ENCODE measurements at regions of chr6 and their contacts with region 1.

Region 1: DNA sequence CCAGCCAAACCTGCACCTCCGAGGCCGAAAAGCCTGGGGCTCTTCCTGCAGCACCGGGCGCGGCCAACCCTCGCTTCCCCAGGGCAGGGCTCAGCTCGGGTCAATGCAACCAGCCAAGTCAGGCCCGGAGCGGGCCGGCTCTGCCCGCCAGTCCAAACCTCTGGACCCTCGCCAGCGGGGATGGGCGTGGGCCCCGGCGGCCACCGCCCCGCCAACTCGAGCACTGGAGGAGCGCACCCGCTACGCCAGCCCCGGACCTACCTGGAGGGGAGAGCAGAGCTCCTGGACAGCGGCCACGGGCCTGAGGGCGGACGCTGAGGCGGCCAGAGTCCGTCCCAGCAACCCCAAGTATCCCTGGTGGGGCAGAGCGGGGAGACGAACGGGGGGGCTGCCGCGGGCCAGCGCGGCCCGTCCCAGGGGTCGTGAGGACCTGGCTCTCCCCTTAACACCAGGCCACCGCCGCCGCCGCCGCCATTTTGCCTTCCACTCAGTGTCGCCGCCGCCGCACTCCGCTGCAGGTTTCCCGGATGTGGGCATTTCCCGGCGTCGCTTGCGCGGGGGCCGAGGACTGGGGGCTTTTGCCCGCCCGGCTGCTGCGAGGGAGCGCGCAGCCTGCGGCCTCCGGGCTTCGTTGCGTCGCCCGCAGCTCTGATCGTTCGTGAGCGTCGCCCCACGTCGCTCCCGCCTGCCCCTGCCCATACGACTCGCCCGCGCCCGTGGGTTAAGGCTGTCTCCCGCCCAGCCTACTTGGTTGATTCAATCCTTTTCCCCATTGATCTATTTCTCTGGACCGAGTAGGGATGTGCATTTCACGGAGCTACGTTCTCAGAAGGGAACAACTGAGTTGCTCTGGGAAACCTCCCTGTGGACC is at the start of gene LATS1:
- DNase-seq: peak; percentile 86 to 93 (median 88)
- ATAC-seq: peak; percentile 94
- H3K4me3 ChIP-seq: peak within 1 kb of the TSS; percentile 98
- H3K27ac ChIP-seq: peak within 1 kb of the TSS; percentile 98
- H3K4me1 ChIP-seq: peaks cover 5 to 17% of the 10 kb centered on the region in 2 experiments; a peak in 4 of 5 replicates
- H3K27me3 ChIP-seq: no peaks in the 10 kb centered on the region
- CTCF ChIP-seq: no peak
- EP300 ChIP-seq: no peak; the same call in 1 of the 2 replicates
- POLR2A ChIP-seq: peak; percentile 96
- RAD21 ChIP-seq: no peak
- polyA plus RNA-seq, gene LATS1: 5.0 to 5.6 TPM

Region 2: GRCh38 chr6:149545754-149546528 is 171.9 kb before region 1 on chr6 and contains the start of gene PPIL4:
- CTCF ChIA-PET with region 1: no interaction called
- POLR2A ChIA-PET with region 1: interaction called, 5 read pairs
- in situ Hi-C with region 1: no loop called
- intact Hi-C with region 1: loop called (anchors 5 kb)
- DNase-seq: peak; percentile 95 to 98 (median 96)
- ATAC-seq: peak; percentile 90
- H3K4me3 ChIP-seq: peak within 1 kb of the TSS; percentile 97
- H3K27ac ChIP-seq: peak within 1 kb of the TSS; percentile 94
- H3K4me1 ChIP-seq: peaks cover 13 to 14% of the 10 kb centered on the region in 2 experiments; a peak in 4 of 5 replicates
- H3K27me3 ChIP-seq: no peaks in the 10 kb centered on the region
- CTCF ChIP-seq: peak; percentile 71 to 99 (median 84)
- EP300 ChIP-seq: peak; percentile 19; the same call in 1 of the 2 replicates
- POLR2A ChIP-seq: peak; percentile 90
- RAD21 ChIP-seq: peak; percentile 60 to 64
- polyA plus RNA-seq, gene PPIL4: 48.5 to 55.2 TPM

Region 3: DNA sequence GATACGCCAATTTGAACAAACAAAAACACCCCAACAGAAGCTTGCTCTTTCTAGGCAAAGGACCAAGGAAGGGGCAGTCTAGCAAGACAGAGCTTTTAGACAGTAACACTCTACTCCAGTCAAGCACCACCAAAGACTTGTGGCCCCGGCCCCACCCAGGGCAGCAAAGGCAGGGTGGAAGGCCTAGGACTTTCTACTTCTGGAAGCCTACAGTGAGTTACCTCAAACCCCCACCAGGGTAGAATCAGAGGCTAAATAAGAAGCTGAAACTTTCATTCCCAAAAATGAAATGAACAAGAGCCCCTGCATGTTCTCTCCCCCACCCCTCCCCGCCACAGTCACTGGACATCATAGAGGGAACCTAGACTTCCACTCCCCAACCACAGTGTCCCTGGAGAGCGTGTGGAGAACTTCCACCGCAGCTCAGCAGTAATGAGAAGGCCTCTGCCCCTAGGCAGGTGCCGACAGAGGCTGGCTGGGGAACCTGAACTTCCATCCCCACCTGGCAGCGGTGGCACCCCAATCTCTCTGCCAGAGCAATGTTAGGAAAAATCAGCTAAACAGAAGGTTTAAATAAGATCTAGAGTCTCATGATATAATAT is 109.3 kb before region 1 on chr6:
- CTCF ChIA-PET with region 1: no interaction called
- POLR2A ChIA-PET with region 1: no interaction called
- in situ Hi-C with region 1: no loop called
- intact Hi-C with region 1: no loop called
- DNase-seq: peak in 1 of 4 experiments; percentile 35
- ATAC-seq: peak; percentile 79
- H3K4me3 ChIP-seq: no peak overlapping the region
- H3K27ac ChIP-seq: no peak overlapping the region
- H3K4me1 ChIP-seq: no peaks in the 10 kb centered on the region
- H3K27me3 ChIP-seq: no peaks in the 10 kb centered on the region
- CTCF ChIP-seq: no peak
- EP300 ChIP-seq: no peak
- POLR2A ChIP-seq: no peak
- RAD21 ChIP-seq: no peak

Region 4: GRCh38 chr6:149648148-149649145 is 69.4 kb before region 1 on chr6 and contains the start of gene KATNA1:
- CTCF ChIA-PET with region 1: no interaction called
- POLR2A ChIA-PET with region 1: interaction called, 4 read pairs
- in situ Hi-C with region 1: no loop called
- intact Hi-C with region 1: loop called (anchors 5 kb)
- DNase-seq: peak; percentile 99
- ATAC-seq: peak; percentile 96
- H3K4me3 ChIP-seq: peak within 1 kb of the TSS; percentile 78
- H3K27ac ChIP-seq: peak within 1 kb of the TSS; percentile 95
- H3K4me1 ChIP-seq: peaks cover 8 to 16% of the 10 kb centered on the region in 2 experiments; a peak in 4 of 5 replicates
- H3K27me3 ChIP-seq: no peaks in the 10 kb centered on the region
- CTCF ChIP-seq: peak; percentile 22 to 46 (median 33); a peak in 3 of 6 replicates
- EP300 ChIP-seq: peak; percentile 55
- POLR2A ChIP-seq: peak; percentile 94
- RAD21 ChIP-seq: peak in 1 of 2 experiments; percentile 25; a peak in 1 of 4 replicates
- polyA plus RNA-seq, gene KATNA1: 22.5 to 33.3 TPM

Region 5: DNA sequence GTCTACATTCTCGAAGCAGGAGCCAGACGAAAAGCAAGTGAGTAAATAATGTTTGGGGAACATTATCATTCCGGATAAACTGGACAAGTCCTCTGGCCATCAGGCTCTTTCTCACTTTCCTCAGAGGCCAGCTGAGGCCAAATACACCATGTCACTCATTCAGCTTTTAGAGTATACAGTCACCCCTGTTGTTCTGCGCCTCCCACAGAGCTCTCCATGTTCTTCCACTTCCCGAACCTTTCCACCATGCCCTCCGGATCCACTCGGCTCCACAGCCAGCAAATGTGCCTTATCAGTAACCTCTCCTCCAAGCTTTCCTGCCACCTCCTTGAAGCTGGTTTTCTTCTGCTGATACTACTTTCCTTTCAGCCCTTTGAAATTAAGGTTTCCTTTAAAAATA is 31.6 kb before region 1 on chr6:
- CTCF ChIA-PET with region 1: no interaction called
- POLR2A ChIA-PET with region 1: interaction called, 11 read pairs
- in situ Hi-C with region 1: no loop called
- intact Hi-C with region 1: no loop called
- DNase-seq: no peak
- ATAC-seq: no peak; the same call in 1 of the 3 replicates
- H3K4me3 ChIP-seq: no peak overlapping the region
- H3K27ac ChIP-seq: no peak overlapping the region
- H3K4me1 ChIP-seq: no peaks in the 10 kb centered on the region
- H3K27me3 ChIP-seq: no peaks in the 10 kb centered on the region
- CTCF ChIP-seq: no peak
- EP300 ChIP-seq: no peak
- POLR2A ChIP-seq: no peak
- RAD21 ChIP-seq: no peak

Region 6: DNA sequence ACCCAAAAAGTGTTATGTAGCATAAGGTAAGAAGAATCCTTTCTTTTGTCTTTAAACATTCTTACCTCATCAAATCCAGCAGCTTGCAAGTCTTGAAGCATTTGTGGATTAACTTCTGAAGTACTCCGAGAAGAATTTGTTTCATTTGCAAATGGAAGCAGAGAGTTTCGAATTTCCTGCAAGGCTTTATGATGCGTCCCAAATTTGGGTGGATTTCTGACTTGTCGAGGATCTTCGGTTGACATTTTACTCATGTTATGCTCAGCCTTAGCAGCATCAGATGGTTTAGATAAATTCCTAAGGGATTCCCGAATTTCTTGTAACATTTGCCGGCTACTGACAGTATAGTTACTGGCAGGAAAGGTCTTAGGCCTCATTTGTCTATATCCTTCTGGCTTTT is 16.1 kb before region 1 on chr6:
- CTCF ChIA-PET with region 1: no interaction called
- POLR2A ChIA-PET with region 1: interaction called, 14 read pairs
- in situ Hi-C with region 1: no loop called
- intact Hi-C with region 1: no loop called
- DNase-seq: no peak
- ATAC-seq: no peak
- H3K4me3 ChIP-seq: no peak overlapping the region
- H3K27ac ChIP-seq: no peak overlapping the region
- H3K4me1 ChIP-seq: no peaks in the 10 kb centered on the region
- H3K27me3 ChIP-seq: no peaks in the 10 kb centered on the region
- CTCF ChIP-seq: no peak
- EP300 ChIP-seq: no peak
- POLR2A ChIP-seq: no peak
- RAD21 ChIP-seq: no peak

Region 7: GRCh38 chr6:149746147-149746946 is 28.5 kb after region 1 on chr6 and contains the start of gene NUP43:
- CTCF ChIA-PET with region 1: no interaction called
- POLR2A ChIA-PET with region 1: interaction called, 13 read pairs
- in situ Hi-C with region 1: no loop called
- intact Hi-C with region 1: loop called (anchors 5 kb)
- DNase-seq: peak; percentile 90 to 99 (median 92)
- ATAC-seq: peak; percentile 69
- H3K4me3 ChIP-seq: peak within 1 kb of the TSS; percentile 69
- H3K27ac ChIP-seq: peak within 1 kb of the TSS; percentile 78
- H3K4me1 ChIP-seq: peaks cover 10 to 19% of the 10 kb centered on the region in 2 experiments
- H3K27me3 ChIP-seq: no peaks in the 10 kb centered on the region
- CTCF ChIP-seq: peak; percentile 61 to 75 (median 71)
- EP300 ChIP-seq: peak; percentile 35; the same call in 1 of the 2 replicates
- POLR2A ChIP-seq: peak; percentile 88
- RAD21 ChIP-seq: peak in 1 of 2 experiments; percentile 18; a peak in 1 of 4 replicates
- polyA plus RNA-seq, gene NUP43: 28.9 to 39.7 TPM

Region 8: GRCh38 chr6:150057501-150057951 is 339.7 kb after region 1 on chr6:
- CTCF ChIA-PET with region 1: no interaction called
- POLR2A ChIA-PET with region 1: no interaction called
- in situ Hi-C with region 1: no loop called
- intact Hi-C with region 1: no loop called
- DNase-seq: no peak
- ATAC-seq: no peak
- H3K4me3 ChIP-seq: no peak overlapping the region
- H3K27ac ChIP-seq: no peak overlapping the region
- H3K4me1 ChIP-seq: peaks cover 0 to 6% of the 10 kb centered on the region in 2 experiments; a peak in 1 of 5 replicates
- H3K27me3 ChIP-seq: peaks cover 70 to 76% of the 10 kb centered on the region in 2 experiments
- CTCF ChIP-seq: no peak
- EP300 ChIP-seq: no peak
- POLR2A ChIP-seq: no peak
- RAD21 ChIP-seq: no peak